Tibial artery (tissue), 4 donors: ENCODE measurements at regions of chr14 and their contacts with region 1.

Region 1: GRCh38 chr14:31360919-31361662 is 59.3 kb downstream of the HEATR5A start:
- DNase-seq: no peak
- H3K4me3 ChIP-seq: no peak overlapping the region
- H3K27ac ChIP-seq: no peak overlapping the region
- H3K4me1 ChIP-seq: peaks cover 0 to 3% (median under 1%) of the 10 kb centered on the region in 4 donors
- H3K27me3 ChIP-seq: no peaks in the 10 kb centered on the region
- CTCF ChIP-seq: no peak

Region 2: GRCh38 chr14:31159682-31160296 is 201.3 kb before region 1 on chr14:
- intact Hi-C with region 1: loop called (anchors 10 kb)
- DNase-seq: peak; percentile 40 to 79
- H3K4me3 ChIP-seq: no peak overlapping the region
- H3K27ac ChIP-seq: peak overlapping the region; percentile 45 to 66
- H3K4me1 ChIP-seq: peaks cover 0 to 37% (median 11%) of the 10 kb centered on the region in 4 donors
- H3K27me3 ChIP-seq: no peaks in the 10 kb centered on the region
- CTCF ChIP-seq: no peak

Region 3: GRCh38 chr14:31207755-31208545 is 153.1 kb before region 1 on chr14 and contains the start of gene HECTD1:
- intact Hi-C with region 1: loop called (anchors 10 kb)
- DNase-seq: peak; percentile 72 to 95
- H3K4me3 ChIP-seq: peak within 1 kb of the TSS; percentile 78 to 90
- H3K27ac ChIP-seq: peak within 1 kb of the TSS; percentile 98 to 100
- H3K4me1 ChIP-seq: peaks cover 0 to 38% (median 14%) of the 10 kb centered on the region in 4 donors
- H3K27me3 ChIP-seq: no peaks in the 10 kb centered on the region
- CTCF ChIP-seq: peak; percentile 77 to 88

Region 4: DNA sequence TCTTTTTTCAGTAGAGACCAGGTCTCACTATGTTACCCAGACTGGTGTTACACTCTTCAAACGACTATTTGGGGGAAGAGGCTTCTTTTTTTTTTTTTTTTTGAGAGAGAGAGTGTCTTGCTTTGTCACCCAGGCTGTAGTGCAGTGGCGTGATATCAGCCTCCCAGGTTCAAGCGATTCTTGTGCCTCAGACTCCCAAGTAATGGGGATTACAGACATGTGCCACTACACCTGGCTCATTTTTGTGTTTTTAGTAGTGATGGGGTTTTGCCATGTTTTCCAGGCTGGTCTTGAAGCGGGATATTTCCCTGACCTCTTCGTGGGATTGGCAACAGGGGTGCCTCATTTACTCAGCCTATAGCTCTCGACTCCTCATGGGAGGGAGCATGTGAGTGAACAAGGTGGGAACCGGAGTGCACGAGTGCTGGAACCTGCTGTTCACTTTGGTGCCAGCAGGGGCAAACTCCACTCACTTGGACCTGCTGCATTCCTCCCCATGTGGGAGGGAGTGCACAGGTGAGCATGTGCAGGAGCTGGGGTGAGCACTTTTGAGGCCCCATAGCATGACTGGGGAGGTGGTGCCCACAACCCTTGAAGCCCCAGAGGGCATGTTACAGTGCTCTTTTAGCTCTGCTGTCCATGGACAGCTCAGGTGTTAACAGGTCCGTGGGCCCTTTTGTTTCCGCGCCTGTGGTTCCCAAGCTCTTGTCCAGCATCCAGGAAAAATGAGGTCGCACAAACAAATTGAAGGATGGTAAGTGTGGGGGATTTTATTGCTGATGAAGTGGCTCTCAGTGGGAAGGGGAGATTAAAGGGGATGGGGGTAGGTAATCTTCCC is 74.4 kb before region 1 on chr14:
- intact Hi-C with region 1: no loop called
- DNase-seq: no peak
- H3K4me3 ChIP-seq: no peak overlapping the region
- H3K27ac ChIP-seq: no peak overlapping the region
- H3K4me1 ChIP-seq: peaks cover 0 to 10% (median 2%) of the 10 kb centered on the region in 4 donors
- H3K27me3 ChIP-seq: no peaks in the 10 kb centered on the region
- CTCF ChIP-seq: peak in 1 of 2 experiments; percentile 17

Region 5: DNA sequence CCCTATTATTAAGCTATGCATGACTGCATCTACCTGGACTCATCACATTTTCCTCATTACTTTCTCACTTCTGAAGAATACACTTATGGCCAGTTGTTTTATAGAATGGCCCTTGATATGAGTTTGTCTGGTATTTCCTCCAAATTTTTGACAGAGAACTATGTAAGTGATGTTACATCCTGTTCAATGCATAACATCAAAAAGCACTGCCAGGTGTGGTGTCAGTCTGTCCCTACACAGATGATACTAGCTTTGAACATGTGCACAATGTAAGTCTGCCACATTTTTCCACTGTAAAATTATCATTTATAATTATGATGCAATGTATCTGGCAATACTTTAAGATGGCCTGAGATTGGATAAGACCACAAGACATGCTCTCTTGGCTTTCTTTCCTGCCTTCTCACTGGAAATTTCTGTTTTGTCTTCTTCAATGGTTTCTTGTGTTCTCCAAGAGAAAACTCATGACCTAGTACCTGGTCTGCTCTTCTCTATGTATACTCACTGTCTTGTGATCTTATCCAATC is 30.9 kb after region 1 on chr14:
- intact Hi-C with region 1: loop called (anchors 2 kb)
- DNase-seq: no peak
- H3K4me3 ChIP-seq: no peak overlapping the region
- H3K27ac ChIP-seq: no peak overlapping the region
- H3K4me1 ChIP-seq: peaks cover 0 to 19% (median 2%) of the 10 kb centered on the region in 4 donors
- H3K27me3 ChIP-seq: no peaks in the 10 kb centered on the region
- CTCF ChIP-seq: no peak

Region 6: GRCh38 chr14:32109676-32110547 is 748.8 kb after region 1 on chr14:
- intact Hi-C with region 1: no loop called
- DNase-seq: no peak
- H3K4me3 ChIP-seq: no peak overlapping the region
- H3K27ac ChIP-seq: no peak overlapping the region
- H3K4me1 ChIP-seq: peaks cover 0 to 47% (median 7%) of the 10 kb centered on the region in 4 donors
- H3K27me3 ChIP-seq: no peaks in the 10 kb centered on the region
- CTCF ChIP-seq: no peak